PC-3 (cell line): ENCODE measurements at regions of chr11 and their contacts with region 1.

Region 1: DNA sequence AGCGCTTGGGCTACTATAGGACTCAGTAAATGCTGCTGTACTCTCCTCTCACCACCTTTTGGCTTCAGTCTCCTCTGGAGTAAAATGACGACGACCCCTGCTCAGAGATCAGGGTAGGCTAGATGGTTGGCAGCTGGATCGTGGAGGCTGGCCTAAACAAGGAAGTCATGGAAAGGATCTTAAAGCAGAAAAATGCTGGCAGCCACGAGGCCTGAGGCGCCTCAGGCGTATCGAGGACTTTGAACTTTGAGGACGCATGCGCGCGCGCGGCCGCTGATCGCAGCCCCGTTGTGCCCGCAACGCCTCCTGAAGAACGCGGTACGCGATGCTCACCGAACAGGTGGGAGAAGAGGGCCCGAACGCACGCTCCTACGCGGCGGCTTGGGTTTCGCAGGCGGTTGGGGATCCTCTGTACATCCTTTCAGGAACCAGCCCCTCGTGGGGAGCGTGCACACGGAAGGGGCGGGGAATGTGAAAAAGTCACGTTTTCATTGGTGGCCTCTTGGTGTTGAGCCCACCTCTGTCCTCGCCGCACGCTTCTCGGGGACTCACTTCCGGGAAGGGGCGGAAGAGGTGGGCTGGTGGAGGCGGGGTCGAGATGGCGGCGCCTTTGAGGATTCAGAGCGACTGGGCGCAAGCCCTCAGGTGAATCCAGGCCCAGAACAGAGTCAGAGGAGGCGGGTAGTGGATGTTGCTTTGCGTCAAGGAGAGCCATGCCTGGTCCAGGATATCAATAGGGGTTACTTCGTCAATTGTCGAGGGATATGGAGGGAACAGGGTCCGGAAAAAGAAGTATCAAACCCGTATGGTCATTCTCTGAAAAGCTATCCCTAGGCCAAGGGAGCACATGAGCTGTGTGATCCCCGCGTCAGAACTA is at the starts of genes COA4 and PAAF1:
- DNase-seq: peak; percentile 99
- ATAC-seq: peak; percentile 97
- H3K4me3 ChIP-seq: peak within 1 kb of the TSS; percentile 95
- H3K27ac ChIP-seq: peak within 1 kb of the TSS; percentile 93
- H3K4me1 ChIP-seq: peaks cover 19% of the 10 kb centered on the region
- H3K27me3 ChIP-seq: no peaks in the 10 kb centered on the region
- CTCF ChIP-seq: no peak
- total RNA-seq, gene COA4: 346 and 367 TPM in 2 replicates
- total RNA-seq, gene PAAF1: 13.3 and 19.5 TPM in 2 replicates

Region 2: GRCh38 chr11:73779084-73779902 is 97.4 kb before region 1 on chr11:
- CTCF ChIA-PET with region 1: no interaction called
- POLR2A ChIA-PET with region 1: no interaction called
- intact Hi-C with region 1: loop called (anchors 2 kb)
- DNase-seq: peak; percentile 99
- ATAC-seq: peak; percentile 98
- H3K4me3 ChIP-seq: peak overlapping the region; percentile 72
- H3K27ac ChIP-seq: peak overlapping the region; percentile 91
- H3K4me1 ChIP-seq: peaks cover 5% of the 10 kb centered on the region; the same call in 1 of the 2 replicates
- H3K27me3 ChIP-seq: no peaks in the 10 kb centered on the region
- CTCF ChIP-seq: no peak

Region 3: GRCh38 chr11:73838443-73839122 is 38.1 kb before region 1 on chr11:
- CTCF ChIA-PET with region 1: no interaction called
- POLR2A ChIA-PET with region 1: no interaction called
- intact Hi-C with region 1: no loop called
- DNase-seq: no peak
- ATAC-seq: peak; percentile 45
- H3K4me3 ChIP-seq: no peak overlapping the region
- H3K27ac ChIP-seq: no peak overlapping the region
- H3K4me1 ChIP-seq: no peaks in the 10 kb centered on the region
- H3K27me3 ChIP-seq: no peaks in the 10 kb centered on the region
- CTCF ChIP-seq: no peak

Region 4: DNA sequence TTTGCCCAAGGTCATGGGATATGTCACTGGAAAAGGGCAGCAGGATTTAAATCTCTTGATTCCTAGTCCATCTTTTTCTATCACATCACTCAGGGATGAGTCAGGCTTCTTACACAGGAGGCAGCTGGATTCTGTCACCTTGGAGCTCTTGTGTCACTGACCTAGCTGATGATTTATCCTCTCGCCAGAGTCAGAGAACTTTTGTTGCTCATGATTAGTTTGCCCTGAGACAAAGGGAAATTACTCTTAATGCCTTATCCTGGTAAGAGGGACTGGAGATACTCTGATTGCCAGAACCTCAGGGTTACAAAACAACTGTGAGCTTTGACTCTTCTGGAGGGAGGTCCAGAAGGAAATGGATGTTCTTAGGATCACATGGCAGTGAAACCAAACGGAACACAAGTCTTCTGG is 10.1 kb before region 1 on chr11:
- CTCF ChIA-PET with region 1: no interaction called
- POLR2A ChIA-PET with region 1: no interaction called
- intact Hi-C with region 1: no loop called
- DNase-seq: peak; percentile 76
- ATAC-seq: peak; percentile 69
- H3K4me3 ChIP-seq: no peak overlapping the region
- H3K27ac ChIP-seq: 0 out of 2 replicates have a peak overlapping the region, but pooled peaks have one; percentile 1
- H3K4me1 ChIP-seq: peaks cover 27% of the 10 kb centered on the region
- H3K27me3 ChIP-seq: no peaks in the 10 kb centered on the region
- CTCF ChIP-seq: no peak